ENCODE measurements at regions of chr1 and their contacts with region 1.

Region 1: DNA sequence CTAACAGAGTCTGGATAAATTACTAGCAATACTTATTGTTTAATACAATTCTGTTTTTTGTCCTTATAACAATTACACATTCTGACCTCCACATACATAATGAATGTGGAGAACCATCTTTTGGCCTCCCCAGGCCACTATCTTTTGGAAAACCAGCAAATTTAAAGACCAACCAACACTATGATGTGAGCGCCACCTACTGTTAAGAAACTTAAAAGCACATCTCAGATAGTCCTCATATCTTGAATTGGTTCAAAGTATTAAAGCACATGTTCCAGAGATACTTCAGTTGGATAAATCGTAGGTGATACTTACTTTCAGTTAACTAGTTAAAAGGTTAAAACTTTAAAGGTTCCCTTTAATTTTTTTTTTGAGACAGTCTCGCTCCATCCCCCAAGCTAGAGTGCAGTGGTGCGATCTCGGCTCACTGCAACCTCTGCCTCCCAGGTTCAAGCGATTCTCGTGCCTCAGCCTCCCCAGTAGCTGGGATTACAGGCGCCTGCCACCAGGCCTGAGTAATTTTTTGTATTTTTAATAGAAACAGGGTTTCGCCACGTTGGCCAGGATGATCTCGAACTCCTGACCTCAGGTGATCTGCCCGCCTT is 29.3 kb upstream of the USP1 start:
- H3K4me3 Mint-ChIP-seq: no peak overlapping the region
- H3K27ac Mint-ChIP-seq: no peak overlapping the region
- H3K4me1 Mint-ChIP-seq: no peaks in the 10 kb centered on the region
- H3K27me3 Mint-ChIP-seq: no peaks in the 10 kb centered on the region

Region 2: DNA sequence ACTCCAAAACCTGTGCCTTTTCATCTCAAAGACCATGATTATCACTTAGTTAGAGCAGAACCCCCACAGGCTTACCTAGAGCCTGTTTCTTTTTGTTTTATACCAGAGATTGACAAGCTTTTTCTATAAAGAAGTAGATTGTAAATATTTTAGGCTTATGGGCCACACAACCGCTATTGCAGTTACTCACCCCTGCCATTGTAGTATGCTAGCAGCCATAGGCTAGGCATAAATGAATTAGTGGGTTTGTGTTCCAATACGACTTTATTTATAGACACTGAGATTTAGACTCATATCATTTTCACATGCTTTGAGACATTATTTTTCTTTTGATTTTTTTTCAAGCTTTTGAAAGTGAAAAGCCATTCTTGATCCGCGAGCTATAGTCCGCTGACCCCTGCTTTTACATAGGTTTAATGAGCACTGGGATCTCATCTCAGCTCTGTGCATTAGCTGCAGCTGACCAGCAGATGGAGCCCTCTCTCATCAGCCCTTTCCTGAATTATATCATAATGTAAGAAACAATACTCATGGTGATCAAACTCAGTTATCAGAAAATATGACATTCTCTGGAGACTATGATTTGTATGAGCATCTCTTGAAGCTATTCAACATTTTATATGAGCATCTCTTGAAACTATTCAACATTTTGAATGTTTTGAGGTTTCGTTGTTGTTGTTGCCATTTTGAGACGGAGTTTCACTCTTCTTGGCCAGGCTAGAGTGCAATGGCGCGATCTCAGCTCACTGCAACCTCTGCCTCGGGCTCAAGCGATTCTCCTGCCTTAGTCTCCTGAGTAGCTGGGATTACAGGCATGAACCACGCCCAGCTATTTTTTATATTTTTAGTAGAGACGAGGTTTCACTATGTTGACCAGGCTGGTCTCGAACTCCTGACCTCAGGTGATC is 324.8 kb before region 1 on chr1:
- intact Hi-C with region 1: loop called (anchors 2 kb)
- H3K4me3 Mint-ChIP-seq: no peak overlapping the region
- H3K27ac Mint-ChIP-seq: no peak overlapping the region
- H3K4me1 Mint-ChIP-seq: no peaks in the 10 kb centered on the region
- H3K27me3 Mint-ChIP-seq: no peaks in the 10 kb centered on the region

Region 3: DNA sequence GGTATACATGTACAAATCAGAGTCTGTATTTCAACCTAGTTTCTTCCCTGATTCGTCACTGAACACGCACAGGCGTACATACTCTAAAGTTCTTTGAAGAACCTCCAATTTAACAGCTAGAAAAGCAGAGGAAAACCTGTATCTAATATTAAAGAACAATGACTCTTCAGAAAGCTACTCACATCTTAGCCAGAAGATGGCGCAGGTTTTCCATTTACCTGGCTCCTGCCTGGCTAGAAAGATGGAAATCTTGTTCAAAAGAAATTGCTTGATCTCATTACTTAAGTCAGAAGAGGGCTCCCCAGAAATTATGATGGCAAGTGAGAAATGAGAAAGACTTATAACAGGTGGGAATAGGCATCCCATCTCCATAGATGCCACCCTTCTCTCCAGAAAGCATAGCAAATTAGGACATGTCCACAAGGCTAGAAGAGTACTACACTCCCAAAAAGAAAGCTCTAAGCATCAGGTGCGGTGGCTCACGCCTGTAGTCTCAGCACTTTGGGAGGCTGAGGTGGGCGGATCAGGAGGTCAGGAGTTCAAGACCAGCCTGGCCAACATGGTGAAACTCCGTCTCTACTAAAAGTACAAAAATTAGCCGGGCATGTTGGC is 231.8 kb before region 1 on chr1:
- intact Hi-C with region 1: loop called (anchors 1 kb)
- H3K4me3 Mint-ChIP-seq: no peak overlapping the region
- H3K27ac Mint-ChIP-seq: no peak overlapping the region
- H3K4me1 Mint-ChIP-seq: no peaks in the 10 kb centered on the region
- H3K27me3 Mint-ChIP-seq: peaks cover 2% of the 10 kb centered on the region

Region 4: GRCh38 chr1:62295921-62296491 is 111.5 kb before region 1 on chr1:
- intact Hi-C with region 1: loop called (anchors 10 kb)
- H3K4me3 Mint-ChIP-seq: no peak overlapping the region
- H3K27ac Mint-ChIP-seq: no peak overlapping the region
- H3K4me1 Mint-ChIP-seq: peaks cover 18% of the 10 kb centered on the region
- H3K27me3 Mint-ChIP-seq: peaks cover 6% of the 10 kb centered on the region

Region 5: DNA sequence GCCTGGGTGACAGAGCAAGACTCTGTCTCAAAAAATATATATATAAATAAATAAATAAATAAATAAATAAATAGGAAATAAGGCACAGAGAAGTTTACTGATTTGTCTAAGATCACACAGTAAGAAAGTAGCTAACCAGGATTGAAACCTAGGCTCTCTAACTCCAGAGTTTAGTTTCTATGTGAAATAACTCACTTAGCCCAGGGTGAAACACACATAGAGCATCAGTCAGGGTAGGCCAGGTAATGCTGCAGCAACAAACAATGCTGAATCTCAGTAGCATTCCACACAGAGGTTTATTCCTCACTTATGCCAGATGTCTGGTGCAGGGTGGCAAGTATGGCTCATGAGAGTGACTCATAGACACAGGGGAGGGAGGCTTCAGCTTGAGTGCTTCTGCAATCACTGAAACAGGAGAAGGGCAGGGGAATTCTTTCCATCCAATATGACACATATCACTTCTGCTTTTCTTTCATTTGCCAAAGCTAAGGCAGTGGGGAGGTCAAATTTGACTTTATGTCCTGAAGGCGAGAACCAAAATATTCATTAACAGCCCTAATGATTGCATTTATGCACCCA is 51.2 kb before region 1 on chr1:
- intact Hi-C with region 1: no loop called
- H3K4me3 Mint-ChIP-seq: no peak overlapping the region
- H3K27ac Mint-ChIP-seq: no peak overlapping the region
- H3K4me1 Mint-ChIP-seq: peaks cover 42% of the 10 kb centered on the region
- H3K27me3 Mint-ChIP-seq: peaks cover 2% of the 10 kb centered on the region

Region 6: DNA sequence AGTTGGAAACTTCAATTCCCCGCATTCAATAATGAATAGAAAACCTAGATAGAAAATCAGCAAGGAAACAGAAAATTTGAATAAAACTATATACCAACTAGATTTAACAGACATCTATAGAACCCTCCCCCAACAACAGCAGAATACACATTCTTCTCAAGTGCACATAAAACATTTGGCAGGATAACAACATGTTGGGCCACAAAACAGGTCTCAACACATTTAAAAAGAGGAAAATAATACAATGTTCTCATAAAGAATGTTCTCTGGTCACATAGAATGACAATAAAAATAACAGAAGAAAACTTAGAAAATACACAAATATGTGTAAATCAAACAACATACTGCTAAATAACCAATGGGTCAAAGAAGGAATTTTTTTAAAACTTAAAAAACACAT is 1090.6 kb after region 1 on chr1:
- intact Hi-C with region 1: no loop called
- H3K4me3 Mint-ChIP-seq: no peak overlapping the region
- H3K27ac Mint-ChIP-seq: no peak overlapping the region
- H3K4me1 Mint-ChIP-seq: peaks cover 5% of the 10 kb centered on the region
- H3K27me3 Mint-ChIP-seq: no peaks in the 10 kb centered on the region

Region 7: DNA sequence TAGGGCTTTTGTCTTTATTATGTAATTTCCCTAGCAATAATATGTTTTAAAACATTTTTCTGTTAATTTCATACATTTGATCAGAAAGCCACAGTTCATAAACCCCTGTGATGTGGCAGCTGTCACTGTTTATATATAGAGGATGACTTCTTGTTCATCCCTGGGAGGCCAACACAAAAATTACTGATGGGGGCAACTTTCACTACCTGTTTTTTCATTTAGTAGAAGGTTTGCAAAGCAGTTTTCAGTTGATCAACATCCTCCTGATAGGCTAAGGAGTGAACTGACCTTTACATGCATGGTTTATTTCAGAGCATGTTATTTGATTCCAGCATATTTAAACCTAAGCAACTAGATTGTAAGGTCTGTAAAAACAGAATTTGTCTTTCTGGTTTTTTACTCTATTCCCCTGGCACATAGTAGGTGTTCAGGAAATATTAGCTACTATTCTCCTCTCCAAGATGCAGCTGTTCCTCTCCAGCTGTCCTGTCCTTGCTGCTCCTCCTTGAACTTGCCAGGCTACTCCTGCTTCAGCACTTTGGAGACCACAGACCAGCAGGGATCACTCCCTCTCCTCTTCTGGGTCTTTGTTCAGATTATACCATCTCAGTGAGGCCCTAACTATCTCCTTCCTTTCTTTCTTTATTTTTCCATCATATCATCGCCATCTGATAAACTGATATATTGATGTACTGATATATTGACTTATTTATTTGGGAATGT is 1421.0 kb after region 1 on chr1:
- intact Hi-C with region 1: no loop called
- H3K4me3 Mint-ChIP-seq: no peak overlapping the region
- H3K27ac Mint-ChIP-seq: no peak overlapping the region
- H3K4me1 Mint-ChIP-seq: no peaks in the 10 kb centered on the region
- H3K27me3 Mint-ChIP-seq: no peaks in the 10 kb centered on the region

Measured in dendritic cell treated with granulocyte-macrophage colony-stimulating factor and Interleukin-4, amounts not matched to agents 40 ng/mL and 50 ng/mL, for 4 days (primary cell).